HCT116 (cell line): ENCODE measurements at regions of chr5 and their contacts with region 1.

Region 1: GRCh38 chr5:176660860-176661641 is 13.8 kb downstream of the TSPAN17 start:
- DNase-seq: peak; percentile 49
- ATAC-seq: peak; percentile 93
- H3K4me3 ChIP-seq: no peak overlapping the region
- H3K27ac ChIP-seq: no peak overlapping the region
- H3K4me1 ChIP-seq: no peaks in the 10 kb centered on the region; a peak in 1 of 4 replicates
- H3K27me3 ChIP-seq: no peaks in the 10 kb centered on the region
- CTCF ChIP-seq: peak; percentile 93 to 97 (median 93)
- POLR2A ChIP-seq: no peak
- RAD21 ChIP-seq: peak; percentile 98

Region 2: DNA sequence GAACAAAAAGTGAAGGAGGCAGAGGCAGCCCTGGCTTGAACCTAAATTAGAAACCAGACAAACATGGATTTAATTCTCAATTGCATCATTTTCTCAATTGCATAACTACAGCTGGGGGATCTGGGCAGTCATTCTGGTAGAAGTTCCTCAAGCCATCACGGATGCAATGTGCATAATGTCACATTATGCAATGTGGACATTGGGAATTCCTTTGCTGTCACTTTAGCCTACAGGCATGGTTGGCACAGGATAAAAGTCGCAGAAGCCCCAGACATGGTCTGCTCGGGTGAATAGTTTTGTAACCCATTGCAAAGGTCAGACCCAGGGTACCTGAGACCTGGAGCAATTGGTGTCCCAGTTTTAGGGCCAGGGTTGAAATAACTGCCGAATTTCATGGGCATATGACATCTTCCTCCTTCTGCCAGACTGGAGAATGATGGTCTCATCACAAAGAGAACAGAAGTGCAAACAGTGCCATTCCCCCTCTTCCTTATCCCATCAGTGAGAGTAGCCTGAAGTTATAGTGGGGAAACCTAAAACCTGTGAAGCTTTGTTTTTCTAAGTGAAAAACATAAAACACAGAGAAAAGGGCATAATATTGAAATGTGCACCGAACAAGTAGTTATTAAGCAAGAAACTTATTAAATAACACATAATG is 1645.9 kb before region 1 on chr5:
- CTCF ChIA-PET with region 1: no interaction called
- POLR2A ChIA-PET with region 1: no interaction called
- RAD21 ChIA-PET with region 1: no interaction called
- intact Hi-C with region 1: no loop called
- DNase-seq: no peak
- ATAC-seq: no peak
- H3K4me3 ChIP-seq: no peak overlapping the region
- H3K27ac ChIP-seq: no peak overlapping the region
- H3K4me1 ChIP-seq: no peaks in the 10 kb centered on the region
- H3K27me3 ChIP-seq: no peaks in the 10 kb centered on the region
- CTCF ChIP-seq: no peak
- POLR2A ChIP-seq: no peak
- RAD21 ChIP-seq: no peak

Region 3: GRCh38 chr5:176596689-176597416 is 64.2 kb before region 1 on chr5:
- CTCF ChIA-PET with region 1: no interaction called
- POLR2A ChIA-PET with region 1: no interaction called
- RAD21 ChIA-PET with region 1: no interaction called
- intact Hi-C with region 1: no loop called
- DNase-seq: no peak
- ATAC-seq: no peak
- H3K4me3 ChIP-seq: no peak overlapping the region
- H3K27ac ChIP-seq: no peak overlapping the region
- H3K4me1 ChIP-seq: no peaks in the 10 kb centered on the region
- H3K27me3 ChIP-seq: no peaks in the 10 kb centered on the region
- CTCF ChIP-seq: no peak
- POLR2A ChIP-seq: no peak
- RAD21 ChIP-seq: no peak

Region 4: GRCh38 chr5:176675675-176676360 is 14.8 kb after region 1 on chr5:
- CTCF ChIA-PET with region 1: interaction called, 10 read pairs
- POLR2A ChIA-PET with region 1: no interaction called
- RAD21 ChIA-PET with region 1: no interaction called
- intact Hi-C with region 1: no loop called
- DNase-seq: peak; percentile 57
- ATAC-seq: peak; percentile 96
- H3K4me3 ChIP-seq: no peak overlapping the region
- H3K27ac ChIP-seq: no peak overlapping the region
- H3K4me1 ChIP-seq: peaks cover 7 to 16% of the 10 kb centered on the region in 2 experiments
- H3K27me3 ChIP-seq: no peaks in the 10 kb centered on the region
- CTCF ChIP-seq: peak; percentile 57 to 90 (median 88); a peak in 5 of 6 replicates
- POLR2A ChIP-seq: no peak
- RAD21 ChIP-seq: peak; percentile 39

Region 5: GRCh38 chr5:176822041-176822792 is 161.2 kb after region 1 on chr5:
- CTCF ChIA-PET with region 1: interaction called, 9 read pairs
- POLR2A ChIA-PET with region 1: no interaction called
- RAD21 ChIA-PET with region 1: no interaction called
- intact Hi-C with region 1: loop called (anchors 5 kb)
- DNase-seq: peak; percentile 80
- ATAC-seq: peak; percentile 82
- H3K4me3 ChIP-seq: peak overlapping the region; percentile 20 to 46; a peak in 3 of 4 replicates
- H3K27ac ChIP-seq: peak overlapping the region; percentile 78
- H3K4me1 ChIP-seq: peaks cover 41 to 56% of the 10 kb centered on the region in 2 experiments
- H3K27me3 ChIP-seq: no peaks in the 10 kb centered on the region
- CTCF ChIP-seq: no peak
- POLR2A ChIP-seq: no peak
- RAD21 ChIP-seq: no peak

Region 6: GRCh38 chr5:177071666-177072385 is 410.8 kb after region 1 on chr5:
- CTCF ChIA-PET with region 1: interaction called, 10 read pairs
- POLR2A ChIA-PET with region 1: no interaction called
- RAD21 ChIA-PET with region 1: interaction called in 1 of 2 experiments, 3 read pairs
- intact Hi-C with region 1: no loop called
- DNase-seq: peak; percentile 69
- ATAC-seq: peak; percentile 93
- H3K4me3 ChIP-seq: no peak overlapping the region
- H3K27ac ChIP-seq: no peak overlapping the region
- H3K4me1 ChIP-seq: peaks cover 0 to 3% of the 10 kb centered on the region in 2 experiments; a peak in 1 of 4 replicates
- H3K27me3 ChIP-seq: no peaks in the 10 kb centered on the region
- CTCF ChIP-seq: peak; percentile 79 to 93 (median 87)
- POLR2A ChIP-seq: no peak
- RAD21 ChIP-seq: peak; percentile 78